ENCODE measurements at regions of chr18 and their contacts with region 1.

Region 1: GRCh38 chr18:62584241-62585120 is 61.7 kb downstream of the ZCCHC2 start:
- DNase-seq: peak; percentile 61 to 85 (median 82)
- ATAC-seq: peak; percentile 99
- H3K4me3 ChIP-seq: no peak overlapping the region
- H3K4me3 Mint-ChIP-seq: peak overlapping the region; percentile 18 to 65 (median 58)
- H3K27ac ChIP-seq: no peak overlapping the region
- H3K27ac Mint-ChIP-seq: peak overlapping the region; percentile 26 to 83 (median 72)
- H3K4me1 ChIP-seq: peaks cover 18 to 22% of the 10 kb centered on the region in 2 donors
- H3K4me1 Mint-ChIP-seq: peaks cover 17 to 50% (median 32%) of the 10 kb centered on the region in 7 donors
- H3K27me3 ChIP-seq: no peaks in the 10 kb centered on the region
- H3K27me3 Mint-ChIP-seq: no peaks in the 10 kb centered on the region

Region 2: GRCh38 chr18:62324917-62325805 is 259.3 kb before region 1 on chr18 and contains the start of gene TNFRSF11A:
- CTCF ChIA-PET with region 1: no interaction called
- POLR2A ChIA-PET with region 1: no interaction called
- intact Hi-C with region 1: loop called (anchors 1 kb)
- DNase-seq: peak; percentile 19 to 83 (median 46)
- ATAC-seq: peak; percentile 91
- H3K4me3 ChIP-seq: peak within 1 kb of the TSS; percentile 50
- H3K4me3 Mint-ChIP-seq: peak within 1 kb of the TSS; percentile 80 to 93 (median 84)
- H3K27ac ChIP-seq: no peak within 1 kb of the TSS
- H3K27ac Mint-ChIP-seq: peak within 1 kb of the TSS in 5 of 9 donors; percentile 15 to 73 (median 65)
- H3K4me1 ChIP-seq: peaks cover 14 to 17% of the 10 kb centered on the region in 2 donors
- H3K4me1 Mint-ChIP-seq: peaks cover 18 to 53% (median 34%) of the 10 kb centered on the region in 7 donors
- H3K27me3 ChIP-seq: peaks cover 12 to 20% of the 10 kb centered on the region in 2 donors
- H3K27me3 Mint-ChIP-seq: peaks cover 46 to 78% (median 70%) of the 10 kb centered on the region in 5 donors
- total RNA-seq, gene TNFRSF11A: 0.16 to 22.2 (median 0.68) TPM

Region 3: DNA sequence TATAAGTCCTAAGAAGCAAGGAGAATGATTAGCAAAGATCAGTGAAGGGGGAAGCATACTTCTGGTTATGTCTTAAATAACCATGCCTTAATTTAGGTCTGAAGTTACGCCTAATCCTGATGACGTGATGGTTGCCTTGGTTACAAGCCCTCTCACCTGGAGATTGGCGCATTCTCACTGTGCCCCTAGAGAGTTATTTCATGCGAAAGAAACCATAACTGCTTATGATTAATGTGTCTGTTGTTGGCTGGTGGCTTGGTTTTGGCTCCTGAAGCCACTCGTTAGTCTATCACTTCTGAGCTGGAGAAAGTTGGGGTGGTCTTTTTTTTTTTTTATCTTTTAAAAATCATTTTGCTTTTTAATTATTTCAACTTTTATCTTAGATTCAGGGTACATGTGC is 212.3 kb before region 1 on chr18:
- CTCF ChIA-PET with region 1: no interaction called
- POLR2A ChIA-PET with region 1: no interaction called
- intact Hi-C with region 1: no loop called
- DNase-seq: no peak
- ATAC-seq: no peak
- H3K4me3 ChIP-seq: no peak overlapping the region
- H3K4me3 Mint-ChIP-seq: no peak overlapping the region
- H3K27ac ChIP-seq: no peak overlapping the region
- H3K27ac Mint-ChIP-seq: no peak overlapping the region
- H3K4me1 ChIP-seq: no peaks in the 10 kb centered on the region
- H3K4me1 Mint-ChIP-seq: peaks cover 0 to 53% (median 0%) of the 10 kb centered on the region in 7 donors
- H3K27me3 ChIP-seq: no peaks in the 10 kb centered on the region
- H3K27me3 Mint-ChIP-seq: no peaks in the 10 kb centered on the region

Region 4: GRCh38 chr18:62458346-62458745 is 126.1 kb before region 1 on chr18:
- CTCF ChIA-PET with region 1: no interaction called
- POLR2A ChIA-PET with region 1: no interaction called
- intact Hi-C with region 1: loop called in 1 of 2 experiments (anchors 1 kb)
- DNase-seq: peak in 1 of 9 donors; percentile 4
- ATAC-seq: no peak
- H3K4me3 ChIP-seq: no peak overlapping the region
- H3K4me3 Mint-ChIP-seq: no peak overlapping the region
- H3K27ac ChIP-seq: no peak overlapping the region
- H3K27ac Mint-ChIP-seq: no peak overlapping the region
- H3K4me1 ChIP-seq: no peaks in the 10 kb centered on the region
- H3K4me1 Mint-ChIP-seq: peaks cover 0 to 6% (median 0%) of the 10 kb centered on the region in 7 donors
- H3K27me3 ChIP-seq: no peaks in the 10 kb centered on the region
- H3K27me3 Mint-ChIP-seq: peaks cover 4 to 10% (median 6%) of the 10 kb centered on the region in 5 donors

Region 5: DNA sequence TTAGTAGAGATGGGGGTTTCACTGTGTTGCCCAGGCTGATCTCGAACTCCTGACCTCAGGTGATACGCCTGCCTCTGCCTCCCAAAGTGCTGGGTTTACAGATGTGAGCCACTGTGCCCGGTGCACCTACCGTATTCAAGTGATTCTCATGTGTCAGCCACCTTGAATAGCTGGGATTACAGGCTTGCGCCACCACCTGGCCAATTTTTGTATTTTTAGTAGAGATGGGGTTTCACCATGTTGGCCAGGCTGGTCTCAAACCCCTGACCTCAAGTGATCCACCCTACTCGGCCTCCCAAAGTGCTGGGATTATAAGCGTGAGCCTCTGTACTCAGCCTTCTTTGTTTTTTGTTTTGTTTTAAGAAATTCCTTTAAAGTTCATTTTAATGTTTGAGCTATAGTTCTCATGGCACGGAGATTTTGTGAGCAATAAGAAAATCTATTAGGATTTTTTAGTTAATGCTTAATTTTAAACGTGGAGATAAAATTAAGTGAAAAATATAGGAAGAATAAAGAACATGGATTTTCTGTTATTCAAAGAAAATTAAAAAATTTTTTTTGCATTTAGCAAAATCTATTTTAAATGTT is 373.5 kb after region 1 on chr18:
- CTCF ChIA-PET with region 1: interaction called, 4 read pairs
- POLR2A ChIA-PET with region 1: no interaction called
- intact Hi-C with region 1: loop called in 1 of 2 experiments (anchors 1 kb)
- DNase-seq: peak in 6 of 9 donors; percentile 18 to 46 (median 28)
- ATAC-seq: peak; percentile 64
- H3K4me3 ChIP-seq: no peak overlapping the region
- H3K4me3 Mint-ChIP-seq: no peak overlapping the region
- H3K27ac ChIP-seq: no peak overlapping the region
- H3K27ac Mint-ChIP-seq: no peak overlapping the region
- H3K4me1 ChIP-seq: peaks cover 0 to 17% of the 10 kb centered on the region in 2 donors
- H3K4me1 Mint-ChIP-seq: peaks cover 11 to 22% (median 17%) of the 10 kb centered on the region in 7 donors
- H3K27me3 ChIP-seq: no peaks in the 10 kb centered on the region
- H3K27me3 Mint-ChIP-seq: no peaks in the 10 kb centered on the region